Esophagus squamous epithelium (tissue), 5 donors: ENCODE measurements at regions of chr9 and their contacts with region 1.

Region 1: GRCh38 chr9:98207606-98208005 is 15.2 kb upstream of the CORO2A start:
- DNase-seq: no peak
- H3K4me3 ChIP-seq: no peak overlapping the region
- H3K27ac ChIP-seq: peak overlapping the region in 2 of 4 donors; percentile 26 to 41
- H3K4me1 ChIP-seq: peaks cover 3 to 53% (median 9%) of the 10 kb centered on the region in 3 donors
- H3K27me3 ChIP-seq: no peaks in the 10 kb centered on the region
- CTCF ChIP-seq: no peak
- POLR2A ChIP-seq: no peak

Region 2: GRCh38 chr9:98263482-98264357 is 56.1 kb after region 1 on chr9:
- intact Hi-C with region 1: loop called (anchors 5 kb)
- DNase-seq: no peak
- H3K4me3 ChIP-seq: no peak overlapping the region
- H3K27ac ChIP-seq: no peak overlapping the region
- H3K4me1 ChIP-seq: no peaks in the 10 kb centered on the region
- H3K27me3 ChIP-seq: no peaks in the 10 kb centered on the region
- CTCF ChIP-seq: peak; percentile 78 to 94 (median 84)
- POLR2A ChIP-seq: no peak

Region 3: GRCh38 chr9:98427491-98427890 is 219.9 kb after region 1 on chr9:
- intact Hi-C with region 1: no loop called
- DNase-seq: no peak
- H3K4me3 ChIP-seq: no peak overlapping the region
- H3K27ac ChIP-seq: no peak overlapping the region
- H3K4me1 ChIP-seq: no peaks in the 10 kb centered on the region
- H3K27me3 ChIP-seq: no peaks in the 10 kb centered on the region
- CTCF ChIP-seq: no peak
- POLR2A ChIP-seq: no peak